ENCODE measurements at regions of chr2 and their contacts with region 1.

Region 1: DNA sequence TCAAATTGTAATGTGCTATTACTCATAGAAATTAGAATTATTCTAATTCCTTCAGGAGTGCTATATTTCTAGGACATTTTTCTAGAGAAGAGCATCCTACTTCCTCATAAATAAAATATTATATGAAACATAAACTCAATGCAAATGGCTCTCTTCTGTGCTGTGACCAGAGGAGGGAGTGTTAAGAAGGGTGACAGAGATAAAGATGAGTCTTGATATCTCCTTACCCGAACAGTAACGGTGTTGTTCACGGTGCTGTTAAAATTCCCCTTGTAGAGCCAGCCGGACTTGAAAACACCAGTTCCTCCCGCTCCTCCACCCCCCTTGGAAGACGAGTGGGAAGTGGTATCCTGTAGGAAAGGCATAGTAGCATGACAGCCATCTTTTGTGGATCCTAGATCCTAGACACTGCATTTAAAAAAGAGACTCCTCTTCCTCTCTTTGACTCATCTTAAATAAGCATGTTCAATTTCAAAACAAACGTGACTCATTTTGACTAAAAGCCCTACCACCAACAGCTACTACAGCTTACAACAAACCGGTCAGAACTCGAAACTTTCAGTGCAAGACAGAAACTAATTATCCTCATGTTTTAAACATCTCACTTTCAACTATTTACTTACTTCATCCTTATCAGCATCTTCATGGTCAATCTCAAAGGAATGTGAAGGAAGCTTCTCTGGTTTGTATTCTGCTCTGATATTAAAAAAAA is 156.3 kb downstream of the DOCK10 start:
- DNase-seq: peak; percentile 63 to 88 (median 85)
- H3K4me3 ChIP-seq: no peak overlapping the region
- H3K4me3 Mint-ChIP-seq: peak overlapping the region in 1 of 2 donors; percentile 27
- H3K27ac ChIP-seq: peak overlapping the region; percentile 31 to 77
- H3K27ac Mint-ChIP-seq: peak overlapping the region; percentile 82 to 96 (median 94)
- H3K4me1 ChIP-seq: peaks cover 67 to 70% of the 10 kb centered on the region in 2 donors
- H3K4me1 Mint-ChIP-seq: peaks cover 66% of the 10 kb centered on the region
- H3K27me3 ChIP-seq: no peaks in the 10 kb centered on the region
- H3K27me3 Mint-ChIP-seq: no peaks in the 10 kb centered on the region
- CTCF ChIP-seq: no peak

Region 2: DNA sequence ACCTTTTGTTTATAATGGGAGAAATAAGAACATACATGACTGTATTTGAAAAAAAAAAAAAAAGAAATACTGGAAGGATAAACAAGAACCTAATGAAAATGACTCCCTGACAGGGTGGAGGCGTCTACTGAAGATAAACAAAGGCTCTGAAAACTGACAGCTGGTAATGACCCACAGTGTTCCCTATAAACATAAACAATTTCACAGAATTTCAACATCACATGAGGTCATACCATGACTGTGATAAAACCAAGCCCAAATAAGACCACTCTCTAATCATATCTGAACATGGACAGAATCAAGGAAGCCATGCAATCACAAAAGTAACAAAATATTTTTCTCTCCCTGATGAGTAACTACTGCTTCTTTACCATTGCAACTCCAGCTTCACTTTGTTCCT is 643.4 kb before region 1 on chr2:
- intact Hi-C with region 1: no loop called
- DNase-seq: no peak
- H3K4me3 ChIP-seq: no peak overlapping the region
- H3K4me3 Mint-ChIP-seq: no peak overlapping the region
- H3K27ac ChIP-seq: no peak overlapping the region
- H3K27ac Mint-ChIP-seq: no peak overlapping the region
- H3K4me1 ChIP-seq: no peaks in the 10 kb centered on the region
- H3K4me1 Mint-ChIP-seq: no peaks in the 10 kb centered on the region
- H3K27me3 ChIP-seq: no peaks in the 10 kb centered on the region
- H3K27me3 Mint-ChIP-seq: peaks cover 3% of the 10 kb centered on the region in 3 donors
- CTCF ChIP-seq: no peak

Region 3: GRCh38 chr2:224922142-224922727 is 36.2 kb after region 1 on chr2:
- intact Hi-C with region 1: loop called (anchors 5 kb)
- DNase-seq: peak; percentile 79 to 94 (median 81)
- H3K4me3 ChIP-seq: peak overlapping the region in 1 of 3 experiments; percentile 29
- H3K4me3 Mint-ChIP-seq: peak overlapping the region in 1 of 2 donors; percentile 13
- H3K27ac ChIP-seq: peak overlapping the region; percentile 61 to 78
- H3K27ac Mint-ChIP-seq: peak overlapping the region; percentile 83 to 94 (median 94)
- H3K4me1 ChIP-seq: peaks cover 64 to 72% of the 10 kb centered on the region in 2 donors
- H3K4me1 Mint-ChIP-seq: peaks cover 52% of the 10 kb centered on the region
- H3K27me3 ChIP-seq: no peaks in the 10 kb centered on the region
- H3K27me3 Mint-ChIP-seq: peaks cover 0 to 3% (median 0%) of the 10 kb centered on the region in 3 donors
- CTCF ChIP-seq: no peak

Region 4: DNA sequence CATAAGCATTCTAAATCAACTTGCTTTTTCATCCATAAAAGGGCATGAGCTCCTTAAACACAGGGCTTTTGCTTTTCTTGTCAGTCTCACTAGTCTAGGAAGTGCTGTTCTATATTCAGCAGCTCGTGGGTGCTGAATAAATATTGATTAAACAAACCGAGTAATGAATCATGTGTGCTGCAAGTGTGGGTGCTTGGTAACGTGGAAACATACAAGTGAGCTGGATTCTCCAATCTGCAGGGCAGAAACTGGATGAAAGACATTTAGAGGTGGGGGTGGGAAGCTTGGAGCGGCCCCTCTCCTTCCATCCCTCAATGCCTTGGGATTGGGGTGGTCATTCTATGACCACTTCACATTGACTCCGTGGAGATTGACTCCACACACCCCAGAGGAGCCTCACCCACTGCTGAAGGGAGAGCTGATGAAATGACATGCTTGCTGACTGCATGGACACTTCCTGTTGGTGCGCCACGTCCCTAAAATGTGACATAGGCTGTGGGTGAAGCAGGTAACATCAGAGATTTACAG is 41.7 kb after region 1 on chr2:
- intact Hi-C with region 1: loop called (anchors 5 kb)
- DNase-seq: peak; percentile 63 to 78 (median 66)
- H3K4me3 ChIP-seq: peak overlapping the region in 1 of 3 experiments; percentile 28
- H3K4me3 Mint-ChIP-seq: peak overlapping the region in 1 of 2 donors; percentile 75
- H3K27ac ChIP-seq: peak overlapping the region; percentile 57 to 81
- H3K27ac Mint-ChIP-seq: peak overlapping the region; percentile 91 to 97 (median 94)
- H3K4me1 ChIP-seq: peaks cover 99 to 100% of the 10 kb centered on the region in 2 donors
- H3K4me1 Mint-ChIP-seq: peaks cover 97% of the 10 kb centered on the region
- H3K27me3 ChIP-seq: no peaks in the 10 kb centered on the region
- H3K27me3 Mint-ChIP-seq: peaks cover 0 to 7% (median 0%) of the 10 kb centered on the region in 3 donors
- CTCF ChIP-seq: no peak

Region 5: DNA sequence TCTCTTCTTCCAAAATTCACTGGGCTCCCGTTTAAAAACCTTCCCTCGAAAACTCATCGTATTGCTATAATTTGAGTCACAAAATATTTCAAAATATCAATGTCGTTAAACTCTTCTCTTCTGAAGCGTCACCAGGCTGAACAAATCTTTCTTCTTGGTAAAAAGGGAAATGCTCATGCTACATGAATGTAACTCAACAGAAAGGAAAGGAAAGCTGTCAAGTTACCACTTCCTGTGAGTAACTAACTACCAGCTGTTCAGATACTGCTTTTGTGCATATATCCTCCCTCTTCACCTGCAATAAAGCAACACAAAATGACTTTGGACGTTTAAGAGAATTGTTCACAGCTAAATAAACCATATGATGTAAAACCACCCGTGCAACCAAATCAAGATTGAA is 60.9 kb after region 1 on chr2:
- intact Hi-C with region 1: loop called (anchors 5 to 10 kb)
- DNase-seq: peak; percentile 84 to 96 (median 94)
- H3K4me3 ChIP-seq: peak overlapping the region; percentile 41 to 82 (median 71)
- H3K4me3 Mint-ChIP-seq: peak overlapping the region; percentile 74 to 88
- H3K27ac ChIP-seq: peak overlapping the region; percentile 48 to 93
- H3K27ac Mint-ChIP-seq: peak overlapping the region; percentile 97 to 98 (median 98)
- H3K4me1 ChIP-seq: peaks cover 84 to 94% of the 10 kb centered on the region in 2 donors
- H3K4me1 Mint-ChIP-seq: peaks cover 88% of the 10 kb centered on the region
- H3K27me3 ChIP-seq: no peaks in the 10 kb centered on the region
- H3K27me3 Mint-ChIP-seq: peaks cover 0 to 2% (median 1%) of the 10 kb centered on the region in 3 donors
- CTCF ChIP-seq: no peak

Region 6: GRCh38 chr2:225002039-225002655 is 116.2 kb after region 1 on chr2:
- intact Hi-C with region 1: loop called in 1 of 2 experiments (anchors 5 kb)
- DNase-seq: peak; percentile 63 to 73 (median 73)
- H3K4me3 ChIP-seq: no peak overlapping the region
- H3K4me3 Mint-ChIP-seq: peak overlapping the region in 1 of 2 donors; percentile 64
- H3K27ac ChIP-seq: peak overlapping the region in 1 of 2 donors; percentile 58
- H3K27ac Mint-ChIP-seq: peak overlapping the region in 6 of 7 donors; percentile 12 to 76 (median 46)
- H3K4me1 ChIP-seq: peaks cover 6 to 7% of the 10 kb centered on the region in 2 donors
- H3K4me1 Mint-ChIP-seq: peaks cover 19% of the 10 kb centered on the region
- H3K27me3 ChIP-seq: no peaks in the 10 kb centered on the region
- H3K27me3 Mint-ChIP-seq: peaks cover 0 to 1% (median 0%) of the 10 kb centered on the region in 3 donors
- CTCF ChIP-seq: peak; percentile 82

Region 7: GRCh38 chr2:225041851-225042799 is 156.1 kb after region 1 on chr2 and contains the start of gene DOCK10:
- intact Hi-C with region 1: no loop called
- DNase-seq: peak; percentile 36 to 63 (median 55)
- H3K4me3 ChIP-seq: peak within 1 kb of the TSS; percentile 79 to 92 (median 86)
- H3K4me3 Mint-ChIP-seq: peak within 1 kb of the TSS; percentile 99
- H3K27ac ChIP-seq: peak within 1 kb of the TSS; percentile 66 to 79
- H3K27ac Mint-ChIP-seq: peak within 1 kb of the TSS; percentile 78 to 97 (median 88)
- H3K4me1 ChIP-seq: peaks cover 25 to 32% of the 10 kb centered on the region in 2 donors
- H3K4me1 Mint-ChIP-seq: peaks cover 42% of the 10 kb centered on the region
- H3K27me3 ChIP-seq: peaks cover 0 to 7% of the 10 kb centered on the region in 2 donors
- H3K27me3 Mint-ChIP-seq: peaks cover 4 to 9% (median 5%) of the 10 kb centered on the region in 3 donors
- CTCF ChIP-seq: no peak
- polyA plus RNA-seq, gene DOCK10: 9.5 to 30.9 (median 16.5) TPM